ENCODE measurements at regions of chr11 and their contacts with region 1.

Region 1: DNA sequence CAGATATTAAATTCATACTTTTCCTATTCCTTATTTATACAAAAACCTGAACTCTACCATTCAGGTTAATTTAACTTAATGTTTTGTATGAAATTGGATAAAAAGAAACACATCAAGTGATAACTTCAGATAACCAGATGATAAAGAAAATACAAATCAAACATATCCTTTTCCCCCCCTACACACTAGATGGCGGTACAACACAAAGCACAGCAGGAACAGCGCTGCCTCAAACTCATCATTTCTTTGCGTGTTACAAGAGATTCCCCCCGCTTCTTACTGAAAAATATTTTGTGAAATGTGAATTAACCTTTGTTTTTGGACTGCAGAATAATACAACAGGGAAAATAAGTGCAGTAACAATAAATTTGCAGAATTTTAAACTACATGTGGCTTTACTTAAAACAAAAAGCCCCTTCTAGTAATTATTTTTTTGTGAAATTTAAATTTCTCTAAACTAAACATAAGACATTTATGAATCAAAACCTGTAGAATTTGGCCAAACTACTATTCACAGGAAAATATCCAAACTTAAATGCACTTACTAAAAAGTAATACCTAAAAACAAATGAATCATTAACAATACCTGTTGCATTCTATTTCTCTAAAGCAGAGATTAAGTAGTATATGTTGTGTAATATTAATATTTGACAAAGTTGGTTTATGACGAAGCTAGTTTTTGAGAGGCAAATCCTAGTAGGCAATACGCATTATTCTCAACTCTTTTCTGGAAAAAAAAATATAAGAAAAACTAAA is 74.4 kb downstream of the ARHGAP32 start:
- DNase-seq: no peak
- ATAC-seq: peak; percentile 64 to 68

Region 2: DNA sequence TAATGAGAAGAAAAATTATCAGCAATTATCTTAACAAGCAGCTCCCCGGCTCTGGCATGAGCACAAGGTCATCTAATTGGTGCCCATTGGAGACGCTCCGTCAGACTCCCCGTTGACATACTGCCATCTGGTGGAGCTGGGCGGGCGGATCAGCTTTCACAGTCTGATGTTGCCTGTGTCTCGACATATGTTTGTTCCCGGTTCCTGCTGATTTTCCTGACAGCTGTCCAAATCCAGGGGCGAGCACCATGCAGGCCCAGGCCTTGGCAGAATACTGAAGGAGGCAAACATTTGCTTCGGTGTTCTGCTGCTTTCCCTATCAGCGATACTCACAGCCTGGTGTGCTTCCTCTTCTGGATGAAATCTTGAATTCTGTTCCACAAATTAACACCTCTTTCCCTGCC is 214.1 kb after region 1 on chr11:
- intact Hi-C with region 1: loop called (anchors 1 to 5 kb)
- DNase-seq: peak; percentile 82
- ATAC-seq: peak; percentile 92 to 97

Region 3: GRCh38 chr11:129750349-129751292 is 632.8 kb after region 1 on chr11:
- intact Hi-C with region 1: loop called in 1 of 2 experiments (anchors 5 kb)
- DNase-seq: peak; percentile 74
- ATAC-seq: peak; percentile 95 to 96